CD4-positive, alpha-beta memory T cell (primary cell): ENCODE measurements at regions of chr5 and their contacts with region 1.

Region 1: GRCh38 chr5:141320225-141321169 is at the start of gene TAF7:
- DNase-seq: peak; percentile 92 to 93 (median 93)
- H3K4me3 ChIP-seq: peak within 1 kb of the TSS; percentile 54 to 77
- H3K4me3 Mint-ChIP-seq: peak within 1 kb of the TSS; percentile 90 to 99 (median 98)
- H3K27ac ChIP-seq: peak within 1 kb of the TSS; percentile 97
- H3K27ac Mint-ChIP-seq: peak within 1 kb of the TSS; percentile 93 to 100 (median 97)
- H3K4me1 ChIP-seq: peaks cover 15% of the 10 kb centered on the region
- H3K4me1 Mint-ChIP-seq: peaks cover 20 to 32% (median 26%) of the 10 kb centered on the region in 4 donors
- H3K27me3 ChIP-seq: no peaks in the 10 kb centered on the region
- H3K27me3 Mint-ChIP-seq: peaks cover 0 to 2% of the 10 kb centered on the region in 2 donors
- total RNA-seq, gene TAF7: 109 to 119 TPM

Region 2: GRCh38 chr5:141084487-141084990 is 236.0 kb before region 1 on chr5:
- CTCF ChIA-PET with region 1: no interaction called
- POLR2A ChIA-PET with region 1: no interaction called
- intact Hi-C with region 1: loop called (anchors 1 kb)
- DNase-seq: peak; percentile 31 to 57 (median 41)
- H3K4me3 ChIP-seq: peak overlapping the region in 1 of 2 donors; percentile 15
- H3K4me3 Mint-ChIP-seq: peak overlapping the region; percentile 82 to 95 (median 90)
- H3K27ac ChIP-seq: no peak overlapping the region
- H3K27ac Mint-ChIP-seq: peak overlapping the region in 4 of 7 donors; percentile 38 to 83 (median 58)
- H3K4me1 ChIP-seq: no peaks in the 10 kb centered on the region
- H3K4me1 Mint-ChIP-seq: peaks cover 2 to 15% (median 6%) of the 10 kb centered on the region in 4 donors
- H3K27me3 ChIP-seq: no peaks in the 10 kb centered on the region
- H3K27me3 Mint-ChIP-seq: peaks cover 7 to 14% of the 10 kb centered on the region in 2 donors

Region 3: DNA sequence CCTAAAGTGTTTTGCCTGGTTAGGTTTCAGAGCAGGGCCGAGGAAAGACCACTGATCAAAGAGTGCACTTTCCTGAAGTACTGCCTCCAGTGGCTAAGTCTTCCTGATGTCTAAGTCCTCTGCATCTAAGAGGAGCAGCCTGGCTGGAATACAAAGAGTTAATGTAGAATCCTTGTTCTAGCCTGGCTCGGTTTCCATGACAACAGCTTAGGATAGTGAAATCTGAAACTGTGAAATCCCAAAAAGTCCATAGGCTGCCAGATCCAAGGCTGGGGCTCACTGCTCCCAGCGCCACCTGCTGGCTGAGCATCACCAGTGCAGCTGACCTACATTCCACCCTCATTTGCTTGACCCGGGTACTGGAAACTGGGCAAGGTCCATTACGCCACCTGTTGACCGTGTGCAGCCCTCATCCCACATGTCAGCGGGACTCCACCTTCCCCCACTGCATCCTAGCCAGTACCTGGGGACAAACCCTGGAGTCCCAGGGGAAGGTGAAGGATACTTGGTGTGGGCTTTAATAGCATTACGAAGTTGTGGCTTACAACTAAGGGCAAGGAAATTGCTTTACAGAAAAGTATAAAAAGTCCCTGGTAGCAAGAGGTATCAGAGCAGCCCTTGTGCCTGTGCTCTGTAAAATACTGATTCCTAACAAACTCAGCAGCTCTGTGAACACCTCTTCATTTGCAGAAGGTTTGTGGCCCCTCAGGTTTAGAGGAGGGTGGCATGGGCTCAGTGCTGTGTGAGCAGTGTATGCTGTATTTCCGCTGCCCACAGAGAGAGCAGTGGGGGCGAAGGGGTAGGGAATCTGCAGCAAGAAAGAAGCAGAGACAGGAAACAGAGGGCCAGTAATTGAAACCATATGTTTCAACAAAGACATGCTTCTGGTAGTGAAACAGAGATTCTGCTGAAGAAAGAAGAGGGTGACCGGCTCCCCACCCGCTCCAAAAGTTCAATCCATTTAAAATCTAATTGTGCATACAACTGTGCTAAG is 204.4 kb after region 1 on chr5:
- CTCF ChIA-PET with region 1: interaction called, 26 read pairs
- POLR2A ChIA-PET with region 1: interaction called, 5 read pairs
- intact Hi-C with region 1: loop called (anchors 1 kb)
- DNase-seq: peak; percentile 46 to 62 (median 51)
- H3K4me3 ChIP-seq: no peak overlapping the region
- H3K4me3 Mint-ChIP-seq: no peak overlapping the region
- H3K27ac ChIP-seq: no peak overlapping the region
- H3K27ac Mint-ChIP-seq: peak overlapping the region in 5 of 7 donors; percentile 26 to 72 (median 57)
- H3K4me1 ChIP-seq: peaks cover 15% of the 10 kb centered on the region
- H3K4me1 Mint-ChIP-seq: peaks cover 11 to 28% (median 21%) of the 10 kb centered on the region in 4 donors
- H3K27me3 ChIP-seq: no peaks in the 10 kb centered on the region
- H3K27me3 Mint-ChIP-seq: no peaks in the 10 kb centered on the region

Region 4: GRCh38 chr5:141636413-141637122 is 316.1 kb after region 1 on chr5 and contains the starts of genes HDAC3 and RELL2:
- CTCF ChIA-PET with region 1: no interaction called
- POLR2A ChIA-PET with region 1: interaction called, 11 read pairs
- intact Hi-C with region 1: no loop called
- DNase-seq: peak; percentile 89 to 95 (median 93)
- H3K4me3 ChIP-seq: peak within 1 kb of the TSS; percentile 86 to 98
- H3K4me3 Mint-ChIP-seq: peak within 1 kb of the TSS; percentile 88 to 96 (median 94)
- H3K27ac ChIP-seq: peak within 1 kb of the TSS; percentile 87
- H3K27ac Mint-ChIP-seq: peak within 1 kb of the TSS; percentile 90 to 98 (median 96)
- H3K4me1 ChIP-seq: peaks cover 50% of the 10 kb centered on the region
- H3K4me1 Mint-ChIP-seq: peaks cover 31 to 51% (median 39%) of the 10 kb centered on the region in 4 donors
- H3K27me3 ChIP-seq: no peaks in the 10 kb centered on the region
- H3K27me3 Mint-ChIP-seq: no peaks in the 10 kb centered on the region
- total RNA-seq, gene HDAC3: 85.1 to 91.0 TPM
- total RNA-seq, gene RELL2: 20.4 to 21.3 TPM